ENCODE measurements at regions of chr3 and their contacts with region 1.

Region 1: DNA sequence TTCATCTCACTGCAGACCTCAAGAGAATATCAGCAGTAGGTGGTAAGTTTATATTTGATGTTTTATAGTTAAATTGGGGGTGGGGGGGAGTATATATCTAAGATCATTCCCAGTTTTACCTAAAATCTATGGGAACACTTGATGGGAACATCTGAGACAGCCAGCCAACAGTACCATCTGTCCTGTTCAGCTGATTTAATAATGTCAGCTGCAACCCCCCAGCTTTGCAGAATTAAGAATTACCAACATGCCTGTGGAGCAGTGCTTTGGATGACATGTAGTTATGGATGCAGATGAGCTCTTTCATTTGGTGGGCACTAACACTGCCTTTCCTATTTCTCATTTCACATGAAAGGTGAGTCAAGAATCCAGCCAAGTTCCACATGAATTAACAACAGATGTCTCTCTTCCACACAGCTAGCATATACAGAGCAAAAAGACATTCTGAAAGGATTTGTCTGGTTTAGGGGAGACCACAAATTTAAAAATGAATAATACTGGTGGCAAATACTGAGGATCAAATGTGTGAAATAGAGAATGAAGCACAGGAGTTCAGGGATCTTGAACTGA is 76.2 kb downstream of the SETD5 start:
- DNase-seq: no peak
- ATAC-seq: no peak
- H3K4me3 ChIP-seq: no peak overlapping the region
- H3K27ac ChIP-seq: no peak overlapping the region
- H3K4me1 ChIP-seq: no peaks in the 10 kb centered on the region
- H3K27me3 ChIP-seq: no peaks in the 10 kb centered on the region
- CTCF ChIP-seq: no peak
- POLR2A ChIP-seq: no peak
- RAD21 ChIP-seq: no peak

Region 2: GRCh38 chr3:9439331-9439730 is 34.2 kb before region 1 on chr3:
- CTCF ChIA-PET with region 1: no interaction called
- POLR2A ChIA-PET with region 1: no interaction called
- RAD21 ChIA-PET with region 1: no interaction called
- intact Hi-C with region 1: loop called (anchors 5 kb)
- DNase-seq: no peak
- ATAC-seq: no peak
- H3K4me3 ChIP-seq: no peak overlapping the region
- H3K27ac ChIP-seq: no peak overlapping the region
- H3K4me1 ChIP-seq: no peaks in the 10 kb centered on the region
- H3K27me3 ChIP-seq: no peaks in the 10 kb centered on the region
- CTCF ChIP-seq: no peak
- POLR2A ChIP-seq: no peak
- RAD21 ChIP-seq: no peak

Region 3: DNA sequence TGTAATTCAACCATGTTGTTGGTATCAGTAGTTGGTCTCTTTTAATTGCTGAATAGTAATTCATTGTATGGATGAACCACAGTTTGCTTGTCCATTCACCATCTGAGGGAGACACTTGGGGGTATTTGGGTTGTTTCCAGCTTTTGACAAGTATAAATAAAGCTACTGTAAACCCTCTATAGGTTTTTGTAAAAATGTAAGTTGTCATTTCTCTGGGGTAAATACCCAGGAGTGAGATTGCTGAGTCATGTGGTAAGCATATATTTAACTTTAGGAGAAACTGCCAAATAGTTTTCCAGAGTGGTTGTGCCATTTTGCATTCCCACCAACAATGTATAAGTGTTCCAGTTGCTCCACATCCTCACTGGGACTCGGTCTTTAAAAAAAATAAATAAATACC is 95.5 kb after region 1 on chr3:
- CTCF ChIA-PET with region 1: no interaction called
- POLR2A ChIA-PET with region 1: no interaction called
- RAD21 ChIA-PET with region 1: no interaction called
- intact Hi-C with region 1: no loop called
- DNase-seq: no peak
- ATAC-seq: no peak
- H3K4me3 ChIP-seq: no peak overlapping the region
- H3K27ac ChIP-seq: no peak overlapping the region
- H3K4me1 ChIP-seq: no peaks in the 10 kb centered on the region
- H3K27me3 ChIP-seq: peaks cover 13% of the 10 kb centered on the region; the same call in 1 of the 2 replicates
- CTCF ChIP-seq: no peak
- POLR2A ChIP-seq: no peak
- RAD21 ChIP-seq: no peak

Measured in HCT116 (cell line).